ENCODE measurements at regions of chr15 and their contacts with region 1.

Region 1: DNA sequence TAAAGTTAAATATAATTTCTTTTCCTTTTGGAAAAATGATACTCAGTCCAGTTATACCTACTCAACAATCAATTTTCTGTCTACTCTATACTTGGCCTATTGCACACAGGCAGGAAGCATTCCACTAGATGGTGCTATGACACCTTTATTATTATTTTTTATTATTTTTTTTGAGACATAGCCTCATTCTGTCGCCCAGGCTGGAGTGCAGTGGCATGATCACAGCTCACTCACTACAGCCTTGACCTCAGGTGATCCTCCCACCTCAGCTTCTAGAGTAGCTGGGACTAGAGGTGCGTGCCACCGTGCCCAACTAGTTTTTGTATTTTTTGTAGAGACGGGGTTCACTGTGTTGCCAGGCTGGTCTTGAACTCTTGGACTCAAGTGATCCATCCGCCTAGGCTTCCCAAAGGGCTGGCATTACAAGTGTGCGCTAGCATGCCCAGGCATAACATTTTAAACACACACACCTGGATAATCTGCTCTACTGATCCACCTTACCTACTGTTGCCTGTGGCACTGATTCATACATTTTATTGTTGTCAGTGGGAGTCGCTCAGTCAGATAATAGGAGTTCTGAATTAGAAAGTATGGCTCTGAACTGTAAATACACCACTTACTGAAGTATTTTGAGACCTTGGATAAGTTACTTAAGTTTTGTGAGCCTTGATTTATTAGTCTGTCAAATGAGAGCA is 56.2 kb downstream of the EIF3J start:
- DNase-seq: peak; percentile 44
- ATAC-seq: peak; percentile 75
- H3K4me3 ChIP-seq: no peak overlapping the region
- H3K27ac ChIP-seq: no peak overlapping the region
- H3K4me1 ChIP-seq: peaks cover 8% of the 10 kb centered on the region
- H3K27me3 ChIP-seq: no peaks in the 10 kb centered on the region
- CTCF ChIP-seq: peak; percentile 63

Region 2: GRCh38 chr15:44654858-44655257 is 61.7 kb after region 1 on chr15:
- CTCF ChIA-PET with region 1: no interaction called
- POLR2A ChIA-PET with region 1: no interaction called
- intact Hi-C with region 1: no loop called
- DNase-seq: no peak
- ATAC-seq: no peak
- H3K4me3 ChIP-seq: no peak overlapping the region
- H3K27ac ChIP-seq: no peak overlapping the region
- H3K4me1 ChIP-seq: no peaks in the 10 kb centered on the region
- H3K27me3 ChIP-seq: no peaks in the 10 kb centered on the region
- CTCF ChIP-seq: no peak

Region 3: GRCh38 chr15:44918136-44918535 is 324.9 kb after region 1 on chr15:
- CTCF ChIA-PET with region 1: no interaction called
- POLR2A ChIA-PET with region 1: no interaction called
- intact Hi-C with region 1: loop called (anchors 10 kb)
- DNase-seq: no peak
- ATAC-seq: no peak
- H3K4me3 ChIP-seq: no peak overlapping the region
- H3K27ac ChIP-seq: no peak overlapping the region
- H3K4me1 ChIP-seq: no peaks in the 10 kb centered on the region
- H3K27me3 ChIP-seq: peaks cover 6% of the 10 kb centered on the region; the same call in 1 of the 2 replicates
- CTCF ChIP-seq: no peak